PC-3 (cell line): ENCODE measurements at regions of chr10 and their contacts with region 1.

Region 1: DNA sequence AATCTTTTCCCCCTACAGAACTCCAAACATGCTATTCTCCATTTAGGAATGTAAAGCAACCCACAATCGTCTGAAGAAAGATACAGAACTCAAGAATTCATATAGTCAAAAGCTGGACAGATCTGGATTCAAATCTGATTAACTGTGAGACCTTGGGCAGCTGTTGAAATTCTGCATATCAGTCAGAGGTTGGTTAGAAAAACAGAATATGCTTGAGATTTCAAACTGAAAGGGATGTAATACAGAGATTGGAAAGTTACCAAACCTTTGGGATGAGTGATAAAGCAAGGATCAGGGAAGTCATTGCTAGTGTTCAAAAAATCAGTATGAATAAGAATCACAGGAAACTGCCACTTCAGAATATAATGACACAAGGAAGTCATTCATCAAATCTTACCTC is 406.6 kb downstream of the HTR7 start:
- DNase-seq: peak; percentile 45
- ATAC-seq: peak; percentile 34
- H3K4me3 ChIP-seq: no peak overlapping the region
- H3K27ac ChIP-seq: peak overlapping the region; percentile 67
- H3K4me1 ChIP-seq: peaks cover 45% of the 10 kb centered on the region
- H3K27me3 ChIP-seq: no peaks in the 10 kb centered on the region
- CTCF ChIP-seq: no peak

Region 2: DNA sequence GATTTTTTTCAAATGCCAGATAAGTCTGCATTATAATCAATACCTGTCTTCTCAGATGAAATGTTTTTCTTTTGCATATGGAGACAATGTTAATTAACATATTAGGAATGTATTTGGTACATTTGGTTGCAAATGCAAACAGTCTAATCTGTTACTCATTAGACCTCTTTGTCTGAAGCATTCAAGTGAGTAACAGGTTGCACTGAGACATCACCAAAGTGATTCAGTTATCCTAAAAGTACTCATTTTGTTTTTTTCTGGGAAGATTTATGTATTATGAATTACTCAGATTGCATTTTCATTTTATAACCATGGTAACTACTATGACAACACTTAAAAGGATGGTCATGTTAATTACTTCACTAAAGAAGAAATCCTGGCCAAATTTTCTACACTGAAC is 107.1 kb before region 1 on chr10:
- CTCF ChIA-PET with region 1: no interaction called
- POLR2A ChIA-PET with region 1: no interaction called
- intact Hi-C with region 1: loop called (anchors 10 kb)
- DNase-seq: peak; percentile 22
- ATAC-seq: no peak; the same call in 1 of the 2 replicates
- H3K4me3 ChIP-seq: no peak overlapping the region
- H3K27ac ChIP-seq: no peak overlapping the region
- H3K4me1 ChIP-seq: peaks cover 18% of the 10 kb centered on the region
- H3K27me3 ChIP-seq: no peaks in the 10 kb centered on the region
- CTCF ChIP-seq: no peak

Region 3: DNA sequence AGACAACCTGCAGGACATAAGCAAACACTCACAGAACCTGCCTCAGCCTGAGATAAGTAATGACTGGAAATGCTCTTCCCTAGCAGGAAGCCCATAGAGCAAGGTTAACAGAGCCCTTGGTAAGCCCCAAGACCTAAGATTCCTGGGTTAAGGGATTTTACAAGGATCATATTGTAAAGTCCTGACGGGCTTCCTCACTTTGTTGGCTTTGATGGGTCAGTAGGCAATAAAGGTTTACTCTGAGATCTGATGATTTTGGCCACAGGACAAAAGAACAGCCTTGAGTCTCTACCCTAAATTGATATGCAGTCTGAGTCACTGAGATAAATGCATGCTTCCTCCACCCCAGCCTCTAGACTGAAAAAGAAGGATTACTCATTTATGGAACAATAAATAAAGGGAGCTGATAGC is 135.8 kb after region 1 on chr10:
- CTCF ChIA-PET with region 1: no interaction called
- POLR2A ChIA-PET with region 1: no interaction called
- intact Hi-C with region 1: loop called (anchors 5 kb)
- DNase-seq: peak; percentile 84
- ATAC-seq: peak; percentile 93
- H3K4me3 ChIP-seq: no peak overlapping the region
- H3K27ac ChIP-seq: peak overlapping the region; percentile 48
- H3K4me1 ChIP-seq: peaks cover 15% of the 10 kb centered on the region
- H3K27me3 ChIP-seq: no peaks in the 10 kb centered on the region
- CTCF ChIP-seq: no peak